ENCODE measurements at regions of chr1 and their contacts with region 1.

Region 1: GRCh38 chr1:53549781-53550180 is 90.6 kb downstream of the DMRTB1 start:
- DNase-seq: no peak
- H3K4me3 ChIP-seq: no peak overlapping the region
- H3K27ac ChIP-seq: no peak overlapping the region
- H3K4me1 ChIP-seq: no peaks in the 10 kb centered on the region
- H3K27me3 ChIP-seq: no peaks in the 10 kb centered on the region
- CTCF ChIP-seq: no peak
- EP300 ChIP-seq: no peak
- POLR2A ChIP-seq: no peak

Region 2: DNA sequence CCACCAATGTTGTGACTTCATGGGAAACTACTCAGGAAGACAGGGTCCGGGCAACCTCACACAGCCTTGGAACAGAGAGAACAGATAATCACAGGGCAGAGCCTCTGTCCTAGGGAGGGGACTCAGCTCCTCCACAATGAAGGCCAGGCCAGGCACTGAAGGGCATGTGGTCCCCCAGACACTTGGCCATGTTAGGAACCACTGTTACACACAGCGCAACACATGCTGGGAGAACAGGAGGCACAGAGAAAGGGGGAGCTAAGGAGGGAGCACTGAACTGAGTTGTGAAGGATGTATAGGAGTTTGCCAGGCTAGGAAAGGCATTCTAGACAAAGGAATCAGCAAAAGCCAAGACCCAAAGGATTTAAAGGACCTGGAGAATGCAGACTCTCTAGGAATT is 37.0 kb after region 1 on chr1:
- in situ Hi-C with region 1: no loop called
- intact Hi-C with region 1: loop called (anchors 1 kb)
- DNase-seq: no peak
- H3K4me3 ChIP-seq: no peak overlapping the region
- H3K27ac ChIP-seq: no peak overlapping the region
- H3K4me1 ChIP-seq: no peaks in the 10 kb centered on the region
- H3K27me3 ChIP-seq: no peaks in the 10 kb centered on the region
- CTCF ChIP-seq: no peak
- EP300 ChIP-seq: no peak
- POLR2A ChIP-seq: no peak

Region 3: GRCh38 chr1:53792806-53793205 is 243.0 kb after region 1 on chr1:
- in situ Hi-C with region 1: no loop called
- intact Hi-C with region 1: no loop called
- DNase-seq: no peak
- H3K4me3 ChIP-seq: no peak overlapping the region
- H3K27ac ChIP-seq: no peak overlapping the region
- H3K4me1 ChIP-seq: no peaks in the 10 kb centered on the region
- H3K27me3 ChIP-seq: no peaks in the 10 kb centered on the region
- CTCF ChIP-seq: no peak
- EP300 ChIP-seq: no peak
- POLR2A ChIP-seq: no peak